ENCODE measurements at regions of chr7 and their contacts with region 1.

Region 1: DNA sequence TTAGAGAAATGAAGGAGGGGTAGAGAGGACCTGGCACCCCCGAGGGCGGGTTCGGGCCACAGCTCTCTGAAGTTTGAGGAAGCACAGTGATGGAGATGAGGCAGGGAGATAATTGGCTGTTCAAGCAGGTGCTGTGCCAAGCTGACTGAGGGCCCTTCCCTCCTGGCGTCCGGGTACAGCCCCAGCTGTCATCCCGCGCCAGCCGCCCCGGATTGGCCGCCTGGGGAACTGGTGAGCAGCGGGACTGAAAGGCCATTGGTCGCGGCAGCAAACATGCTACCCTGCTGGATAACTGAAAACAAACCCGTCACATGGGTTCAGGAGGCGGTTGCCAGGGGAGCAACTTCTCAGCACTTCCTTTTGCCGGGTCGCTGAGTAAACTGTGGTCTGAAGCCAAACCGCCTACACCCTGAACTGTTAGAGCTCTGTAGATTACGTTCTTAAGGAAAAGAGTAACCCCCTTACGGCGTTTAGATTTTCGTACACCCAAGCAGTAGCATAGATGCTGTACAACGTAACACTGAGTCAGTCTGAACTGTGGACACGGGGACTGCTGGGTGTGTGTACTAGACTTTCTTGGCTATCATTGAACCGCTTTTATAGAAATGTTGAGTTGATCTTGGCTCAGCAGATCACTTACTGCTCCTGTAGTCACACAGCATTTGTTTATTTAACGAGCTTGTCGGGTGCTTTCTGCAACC is 1.3 kb downstream of the INSIG1 start:
- DNase-seq: peak; percentile 96
- H3K4me3 Mint-ChIP-seq: peak overlapping the region; percentile 96
- H3K27ac Mint-ChIP-seq: peak overlapping the region; percentile 95
- H3K4me1 Mint-ChIP-seq: peaks cover 59% of the 10 kb centered on the region
- H3K27me3 Mint-ChIP-seq: no peaks in the 10 kb centered on the region

Region 2: DNA sequence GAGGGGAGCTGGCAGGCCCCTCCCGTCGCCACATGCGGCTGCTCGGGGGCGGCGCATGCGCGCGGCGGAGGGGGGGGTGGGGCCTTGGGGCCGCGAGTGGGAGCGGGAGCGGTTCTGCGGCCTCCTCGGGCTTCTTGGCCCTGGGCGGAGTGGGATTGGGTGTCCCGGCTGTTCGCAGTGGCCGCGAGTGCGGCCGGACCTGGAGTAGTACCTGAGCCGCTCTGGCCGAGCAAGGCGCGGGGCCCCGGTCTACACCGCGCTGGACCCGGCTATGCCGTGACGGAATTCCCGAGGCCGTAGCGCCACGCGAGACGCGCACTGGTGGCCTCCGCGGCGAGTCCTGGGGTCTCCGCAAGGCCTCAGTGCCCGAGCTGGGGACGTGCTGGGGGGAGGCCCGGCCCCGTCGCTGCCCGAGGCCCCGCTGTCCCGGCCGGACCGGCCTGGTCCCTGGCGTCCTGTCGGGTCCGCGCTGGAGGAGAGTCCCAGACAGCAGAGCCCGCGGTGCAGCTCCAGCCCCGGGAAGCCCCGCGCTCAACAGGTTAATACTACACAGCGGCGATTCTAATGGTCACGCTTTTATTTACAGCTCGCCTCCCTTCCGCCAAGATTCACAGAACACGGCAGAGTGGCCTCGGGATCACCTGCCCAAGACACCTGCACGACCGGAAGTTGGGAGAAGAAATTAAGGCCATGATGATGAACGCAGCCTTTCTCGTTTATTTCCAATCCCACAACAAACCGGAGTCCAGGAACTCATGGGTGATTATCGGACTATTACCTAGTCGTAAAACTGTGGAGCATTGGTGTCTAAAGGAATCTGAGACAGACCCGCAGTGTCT is 295.4 kb before region 1 on chr7:
- intact Hi-C with region 1: loop called (anchors 2 kb)
- DNase-seq: peak; percentile 77
- H3K4me3 Mint-ChIP-seq: peak overlapping the region; percentile 93
- H3K27ac Mint-ChIP-seq: peak overlapping the region; percentile 92
- H3K4me1 Mint-ChIP-seq: peaks cover 13% of the 10 kb centered on the region
- H3K27me3 Mint-ChIP-seq: no peaks in the 10 kb centered on the region

Region 3: GRCh38 chr7:155277690-155277994 is 21.3 kb before region 1 on chr7:
- intact Hi-C with region 1: loop called (anchors 1 kb)
- DNase-seq: no peak
- H3K4me3 Mint-ChIP-seq: no peak overlapping the region
- H3K27ac Mint-ChIP-seq: no peak overlapping the region
- H3K4me1 Mint-ChIP-seq: peaks cover 54% of the 10 kb centered on the region
- H3K27me3 Mint-ChIP-seq: no peaks in the 10 kb centered on the region

Region 4: DNA sequence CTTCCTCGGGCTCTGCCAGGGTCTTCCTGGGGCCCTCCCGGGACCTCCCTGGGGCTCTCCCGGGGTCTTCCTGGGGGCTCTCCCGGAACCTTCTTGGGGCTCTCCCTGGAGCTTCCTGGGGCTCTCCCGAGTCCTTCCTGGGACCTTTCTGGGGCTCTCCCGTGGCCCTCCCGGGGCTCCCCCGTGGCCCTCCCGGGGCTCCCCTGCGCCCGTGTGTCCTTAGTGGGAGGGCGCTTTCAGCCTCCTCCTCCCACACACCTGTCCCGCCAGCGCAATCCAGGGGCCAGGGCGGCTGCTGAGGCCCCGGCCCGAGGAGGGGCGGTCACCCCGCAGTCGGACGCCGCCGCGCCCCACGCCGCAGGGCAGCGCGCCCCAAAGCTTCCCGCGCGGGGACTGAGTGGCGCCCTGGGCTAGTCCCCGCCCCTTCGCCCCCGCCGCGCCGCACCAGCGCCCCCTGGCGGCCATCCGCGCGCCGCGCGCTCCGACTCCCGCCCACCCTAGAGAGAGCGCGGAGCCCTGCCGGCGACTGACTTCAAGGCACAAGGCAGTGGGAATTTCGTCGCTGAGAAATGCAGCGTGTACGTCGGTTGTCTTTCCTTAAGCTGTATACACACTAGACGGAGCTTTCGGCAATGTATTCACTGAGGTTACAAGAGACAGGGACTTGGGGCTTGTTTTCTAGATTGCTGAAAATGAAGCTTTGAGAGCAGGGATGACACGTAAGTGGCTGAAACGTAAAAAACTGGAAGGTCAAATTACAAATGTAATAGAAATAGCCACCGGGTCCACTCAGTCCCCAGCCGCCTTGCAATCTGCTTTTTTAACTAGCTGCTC is 45.8 kb after region 1 on chr7:
- intact Hi-C with region 1: loop called (anchors 1 kb)
- DNase-seq: peak; percentile 75
- H3K4me3 Mint-ChIP-seq: peak overlapping the region; percentile 68
- H3K27ac Mint-ChIP-seq: no peak overlapping the region
- H3K4me1 Mint-ChIP-seq: peaks cover 12% of the 10 kb centered on the region
- H3K27me3 Mint-ChIP-seq: peaks cover 19% of the 10 kb centered on the region

Region 5: DNA sequence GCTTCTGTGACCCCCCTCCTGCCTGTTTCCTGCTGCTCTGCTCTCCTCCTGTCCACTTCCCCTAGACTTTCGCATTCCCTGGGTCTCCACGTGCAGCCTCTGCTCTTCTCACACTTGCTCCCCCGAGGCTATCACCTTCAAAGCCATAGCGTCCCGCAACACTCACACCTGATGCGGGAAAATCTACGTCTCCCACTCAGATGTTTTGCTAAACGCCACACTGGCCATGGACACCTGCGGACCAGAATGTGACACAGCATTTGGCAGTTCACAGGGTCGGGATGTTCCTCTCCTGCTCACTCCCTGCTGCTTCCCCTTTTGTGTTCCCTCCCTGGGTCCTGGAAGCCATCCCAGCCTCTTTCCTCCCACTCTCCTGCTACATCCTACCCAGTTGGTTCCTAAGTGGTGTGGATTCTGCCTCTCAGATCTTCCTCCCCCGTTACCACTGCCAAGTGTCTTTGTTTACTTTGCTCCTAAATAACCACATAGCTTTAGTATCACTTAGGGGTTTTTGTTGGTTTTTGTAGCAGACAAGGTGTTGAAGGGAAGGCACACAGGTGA is 311.7 kb after region 1 on chr7:
- intact Hi-C with region 1: no loop called
- DNase-seq: no peak
- H3K4me3 Mint-ChIP-seq: no peak overlapping the region
- H3K27ac Mint-ChIP-seq: no peak overlapping the region
- H3K4me1 Mint-ChIP-seq: no peaks in the 10 kb centered on the region
- H3K27me3 Mint-ChIP-seq: peaks cover 13% of the 10 kb centered on the region

Region 6: DNA sequence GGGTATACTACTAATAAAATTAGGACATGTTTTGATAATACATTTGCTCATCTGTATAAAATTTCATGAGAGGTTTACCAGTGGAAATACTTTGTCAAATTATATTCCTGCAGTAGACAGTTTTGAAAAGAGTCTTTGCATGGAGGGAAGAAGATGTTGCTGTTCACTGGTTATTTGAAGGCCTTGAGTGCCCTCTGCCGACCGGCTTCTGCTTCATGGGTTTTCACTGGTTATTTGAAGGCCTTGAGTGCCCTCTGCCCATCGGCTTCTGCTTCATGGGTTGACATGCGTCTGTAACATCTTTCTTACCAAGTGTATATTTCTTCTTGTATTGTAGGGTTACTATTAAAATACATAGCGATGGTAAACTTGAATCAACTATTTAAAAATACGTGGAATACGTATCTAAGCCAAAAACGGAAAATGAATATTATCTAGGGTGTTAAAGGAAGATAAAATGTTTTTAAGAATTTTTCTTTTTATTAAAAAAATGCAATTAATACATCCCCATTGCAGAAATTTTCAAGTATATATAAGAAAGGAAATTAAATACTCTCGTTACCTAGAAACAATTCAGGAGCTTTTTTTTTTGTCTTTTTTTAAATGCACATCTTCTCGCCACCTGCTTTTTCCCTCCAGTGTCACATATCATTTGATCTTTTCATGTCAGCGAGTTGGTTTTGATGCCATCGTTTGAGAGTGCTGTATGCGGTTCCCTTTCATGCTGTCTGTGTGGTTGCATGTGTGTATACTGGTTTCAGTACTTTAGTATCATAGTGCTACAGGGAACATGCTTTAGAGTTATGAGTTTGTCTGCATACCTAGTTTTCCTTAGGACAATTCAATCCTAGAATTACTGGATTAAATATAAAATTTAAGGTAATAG is 439.9 kb after region 1 on chr7:
- intact Hi-C with region 1: loop called (anchors 10 kb)
- DNase-seq: peak; percentile 46
- H3K4me3 Mint-ChIP-seq: peak overlapping the region; percentile 51
- H3K27ac Mint-ChIP-seq: peak overlapping the region; percentile 78
- H3K4me1 Mint-ChIP-seq: peaks cover 74% of the 10 kb centered on the region
- H3K27me3 Mint-ChIP-seq: no peaks in the 10 kb centered on the region

Region 7: GRCh38 chr7:156773966-156774365 is 1475.0 kb after region 1 on chr7:
- intact Hi-C with region 1: loop called (anchors 10 kb)
- DNase-seq: no peak
- H3K4me3 Mint-ChIP-seq: no peak overlapping the region
- H3K27ac Mint-ChIP-seq: peak overlapping the region; percentile 73
- H3K4me1 Mint-ChIP-seq: peaks cover 61% of the 10 kb centered on the region
- H3K27me3 Mint-ChIP-seq: no peaks in the 10 kb centered on the region

Measured in activated T-helper 2 cell treated with anti-CD3 and anti-CD28 coated beads, Interferon-gamma antibody, Interleukin-2, Interleukin-4, amounts not matched to agents 10 μg/mL and 5 μg/mL and 100 μg/mL, durations not matched to agents 14 hours and 24 hours and 36 hours (primary cell).